ENCODE measurements at regions of chr2 and their contacts with region 1.

Region 1: DNA sequence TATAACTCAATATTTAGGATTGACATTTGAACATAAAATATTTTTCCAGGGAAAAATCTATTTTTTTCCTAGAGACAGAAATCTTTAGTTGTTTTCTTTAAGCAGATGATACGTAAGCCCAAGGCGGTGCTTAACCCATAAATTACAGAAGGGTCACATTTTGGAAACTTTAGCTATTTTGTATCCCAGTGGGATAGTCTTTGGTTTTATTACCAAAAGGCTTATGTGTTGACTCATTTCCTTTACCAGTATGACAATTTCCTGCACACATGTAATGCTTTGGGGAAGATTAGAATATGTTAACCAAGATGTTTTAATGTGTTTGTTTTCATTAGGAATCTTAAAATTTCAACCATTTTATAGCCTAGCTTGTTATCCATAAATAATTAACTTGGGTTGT is 24.8 kb downstream of the DYNC1I2 start:
- DNase-seq: no peak
- CTCF ChIP-seq: no peak

Region 2: GRCh38 chr2:171723724-171724683 is 12.0 kb after region 1 on chr2:
- CTCF ChIA-PET with region 1: interaction called, 18 read pairs
- POLR2A ChIA-PET with region 1: no interaction called
- DNase-seq: no peak
- CTCF ChIP-seq: no peak

Region 3: GRCh38 chr2:171858397-171858958 is 146.4 kb after region 1 on chr2:
- CTCF ChIA-PET with region 1: no interaction called
- POLR2A ChIA-PET with region 1: no interaction called
- DNase-seq: no peak
- CTCF ChIP-seq: no peak